Activated naive CD4-positive, alpha-beta T cell treated with anti-CD3 and anti-CD28 coated beads for 36 hours (primary cell): ENCODE measurements at regions of chr7 and their contacts with region 1.

Region 1: GRCh38 chr7:139075031-139075652 is 34.4 kb downstream of the ZC3HAV1 start:
- DNase-seq: peak; percentile 81
- H3K4me3 Mint-ChIP-seq: peak overlapping the region; percentile 11
- H3K27ac Mint-ChIP-seq: peak overlapping the region; percentile 84
- H3K4me1 Mint-ChIP-seq: peaks cover 60% of the 10 kb centered on the region
- H3K27me3 Mint-ChIP-seq: no peaks in the 10 kb centered on the region

Region 2: DNA sequence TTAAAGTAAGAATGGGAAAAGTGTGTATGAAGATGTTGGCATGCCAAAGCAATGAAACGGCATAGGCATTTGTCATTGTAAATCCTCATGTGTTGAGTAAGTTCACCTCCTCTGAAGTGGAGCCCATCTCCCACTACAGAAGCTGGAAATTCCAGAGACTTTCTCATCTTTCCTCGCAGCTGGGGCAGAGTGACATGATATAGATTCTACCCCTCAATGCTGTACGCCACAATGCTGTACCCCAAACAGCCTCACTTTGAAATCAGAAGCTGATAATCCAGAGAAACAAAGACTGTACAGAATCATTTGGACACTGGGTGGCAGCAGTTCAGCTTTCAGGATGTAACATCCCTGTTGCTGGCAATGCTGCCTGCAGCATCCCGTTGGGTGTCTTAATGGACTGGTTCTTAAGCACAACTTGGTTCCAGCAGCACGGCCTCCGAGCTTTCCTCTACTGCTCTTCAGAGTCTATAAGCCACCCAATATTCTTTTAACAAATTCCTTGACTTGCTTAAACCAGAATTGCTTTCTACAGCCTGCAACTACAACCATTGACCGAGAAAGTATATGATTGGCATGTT is 58.1 kb before region 1 on chr7:
- CTCF ChIA-PET with region 1: interaction called, 13 read pairs
- intact Hi-C with region 1: loop called (anchors 1 kb)
- DNase-seq: peak; percentile 80
- H3K4me3 Mint-ChIP-seq: no peak overlapping the region
- H3K27ac Mint-ChIP-seq: no peak overlapping the region
- H3K4me1 Mint-ChIP-seq: peaks cover 4% of the 10 kb centered on the region
- H3K27me3 Mint-ChIP-seq: no peaks in the 10 kb centered on the region

Region 3: GRCh38 chr7:139043823-139044812 is 31.0 kb before region 1 on chr7:
- CTCF ChIA-PET with region 1: interaction called, 5 read pairs
- intact Hi-C with region 1: loop called (anchors 2 kb)
- DNase-seq: peak; percentile 76
- H3K4me3 Mint-ChIP-seq: no peak overlapping the region
- H3K27ac Mint-ChIP-seq: peak overlapping the region; percentile 59
- H3K4me1 Mint-ChIP-seq: peaks cover 46% of the 10 kb centered on the region
- H3K27me3 Mint-ChIP-seq: no peaks in the 10 kb centered on the region

Region 4: GRCh38 chr7:139058943-139059342 is 16.2 kb before region 1 on chr7:
- CTCF ChIA-PET with region 1: interaction called, 32 read pairs
- intact Hi-C with region 1: no loop called
- DNase-seq: no peak
- H3K4me3 Mint-ChIP-seq: no peak overlapping the region
- H3K27ac Mint-ChIP-seq: peak overlapping the region; percentile 86
- H3K4me1 Mint-ChIP-seq: peaks cover 73% of the 10 kb centered on the region
- H3K27me3 Mint-ChIP-seq: no peaks in the 10 kb centered on the region

Region 5: DNA sequence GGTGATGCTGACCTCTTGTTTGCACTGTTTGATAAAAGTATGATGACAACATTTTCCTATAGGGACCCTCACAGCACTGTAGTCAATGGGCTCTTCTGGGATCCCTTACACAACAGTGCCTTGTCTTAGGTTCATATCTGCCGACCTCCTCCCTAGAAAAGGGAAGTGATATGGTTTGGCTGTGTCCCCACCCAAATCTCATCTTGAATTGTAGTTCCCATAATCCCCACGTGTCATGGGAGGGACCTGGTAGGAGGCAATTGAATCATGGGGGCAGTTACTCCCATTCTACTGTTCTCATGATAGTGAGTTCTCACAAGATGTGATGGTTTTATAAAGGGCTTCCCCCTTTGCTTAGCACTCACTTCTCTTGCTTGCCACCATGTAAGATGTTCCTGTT is 11.3 kb after region 1 on chr7:
- CTCF ChIA-PET with region 1: interaction called, 19 read pairs
- intact Hi-C with region 1: no loop called
- DNase-seq: no peak
- H3K4me3 Mint-ChIP-seq: no peak overlapping the region
- H3K27ac Mint-ChIP-seq: peak overlapping the region; percentile 89
- H3K4me1 Mint-ChIP-seq: peaks cover 85% of the 10 kb centered on the region
- H3K27me3 Mint-ChIP-seq: no peaks in the 10 kb centered on the region

Region 6: GRCh38 chr7:139095194-139095659 is 20.1 kb after region 1 on chr7:
- CTCF ChIA-PET with region 1: interaction called, 19 read pairs
- intact Hi-C with region 1: no loop called
- DNase-seq: peak; percentile 84
- H3K4me3 Mint-ChIP-seq: peak overlapping the region; percentile 70
- H3K27ac Mint-ChIP-seq: peak overlapping the region; percentile 95
- H3K4me1 Mint-ChIP-seq: peaks cover 90% of the 10 kb centered on the region
- H3K27me3 Mint-ChIP-seq: no peaks in the 10 kb centered on the region

Region 7: DNA sequence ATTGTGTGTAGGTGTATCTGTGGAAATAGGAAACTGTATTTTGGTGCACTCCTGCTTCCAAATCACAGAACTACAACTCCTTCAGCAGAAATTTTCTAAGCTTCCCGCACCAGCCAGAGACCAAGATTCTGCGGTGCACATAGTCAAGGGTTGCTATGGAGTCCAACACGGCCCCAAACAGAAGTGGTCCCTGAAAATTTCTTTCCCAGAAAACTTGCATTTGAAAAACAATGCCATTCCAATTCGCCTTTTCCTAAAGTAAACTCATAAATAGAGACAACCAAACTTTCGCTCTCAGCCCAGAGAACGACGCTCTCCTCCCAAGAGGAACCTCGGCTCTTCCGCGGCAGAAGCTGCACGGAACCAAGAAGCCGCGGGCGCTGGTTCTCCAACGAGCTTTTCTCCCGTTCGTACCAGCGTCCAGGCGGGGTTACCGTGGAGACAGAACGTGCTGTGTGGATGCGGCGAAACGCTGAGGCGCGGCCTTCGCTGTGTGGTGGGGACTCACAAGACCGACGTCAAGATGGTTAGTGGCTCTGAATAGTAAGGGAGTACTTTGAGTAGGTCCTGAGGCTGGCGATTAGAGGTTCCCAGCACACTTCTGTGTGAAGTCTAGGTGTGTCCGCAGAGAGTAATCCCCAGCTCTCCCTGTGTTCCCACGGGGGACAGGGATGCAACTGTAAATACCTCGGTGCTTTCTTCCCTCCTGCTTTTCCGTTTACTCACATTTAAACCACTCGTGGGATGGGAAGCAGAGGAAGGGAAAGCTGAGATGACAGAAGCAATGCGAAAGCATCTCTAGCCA is 58.4 kb after region 1 on chr7:
- CTCF ChIA-PET with region 1: interaction called, 9 read pairs
- intact Hi-C with region 1: loop called (anchors 2 kb)
- DNase-seq: peak; percentile 92
- H3K4me3 Mint-ChIP-seq: peak overlapping the region; percentile 84
- H3K27ac Mint-ChIP-seq: peak overlapping the region; percentile 68
- H3K4me1 Mint-ChIP-seq: peaks cover 22% of the 10 kb centered on the region
- H3K27me3 Mint-ChIP-seq: no peaks in the 10 kb centered on the region

Region 8: GRCh38 chr7:139505563-139505962 is 430.4 kb after region 1 on chr7:
- CTCF ChIA-PET with region 1: no interaction called
- intact Hi-C with region 1: no loop called
- DNase-seq: peak; percentile 50
- H3K4me3 Mint-ChIP-seq: no peak overlapping the region
- H3K27ac Mint-ChIP-seq: no peak overlapping the region
- H3K4me1 Mint-ChIP-seq: no peaks in the 10 kb centered on the region
- H3K27me3 Mint-ChIP-seq: no peaks in the 10 kb centered on the region